ENCODE measurements at regions of chrX and their contacts with region 1.

Region 1: DNA sequence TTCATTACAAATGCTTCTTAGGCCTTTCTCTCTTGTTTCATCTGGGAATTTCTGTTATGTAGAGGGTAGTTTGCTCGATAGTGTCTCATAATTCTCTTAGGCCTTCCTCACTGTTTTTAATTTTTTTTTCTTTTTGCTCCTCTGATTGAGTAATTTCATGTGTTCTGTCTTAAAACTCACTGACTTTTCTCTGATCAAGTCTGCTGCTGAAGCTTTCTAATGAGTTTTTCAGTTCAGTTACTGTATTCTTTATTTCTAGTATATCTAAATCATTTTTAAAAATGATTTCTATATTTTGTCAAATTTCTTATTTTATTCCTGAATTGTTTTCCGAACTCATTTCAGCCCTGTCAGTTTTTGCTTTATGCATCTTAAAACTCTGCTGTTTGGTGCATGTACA is 228.0 kb downstream of the MID1IP1 start:
- DNase-seq: no peak
- H3K4me3 ChIP-seq: no peak overlapping the region
- H3K27ac ChIP-seq: no peak overlapping the region
- H3K4me1 ChIP-seq: no peaks in the 10 kb centered on the region
- H3K27me3 ChIP-seq: peaks cover 0 to 8% of the 10 kb centered on the region in 2 donors
- CTCF ChIP-seq: no peak
- POLR2A ChIP-seq: no peak

Region 2: DNA sequence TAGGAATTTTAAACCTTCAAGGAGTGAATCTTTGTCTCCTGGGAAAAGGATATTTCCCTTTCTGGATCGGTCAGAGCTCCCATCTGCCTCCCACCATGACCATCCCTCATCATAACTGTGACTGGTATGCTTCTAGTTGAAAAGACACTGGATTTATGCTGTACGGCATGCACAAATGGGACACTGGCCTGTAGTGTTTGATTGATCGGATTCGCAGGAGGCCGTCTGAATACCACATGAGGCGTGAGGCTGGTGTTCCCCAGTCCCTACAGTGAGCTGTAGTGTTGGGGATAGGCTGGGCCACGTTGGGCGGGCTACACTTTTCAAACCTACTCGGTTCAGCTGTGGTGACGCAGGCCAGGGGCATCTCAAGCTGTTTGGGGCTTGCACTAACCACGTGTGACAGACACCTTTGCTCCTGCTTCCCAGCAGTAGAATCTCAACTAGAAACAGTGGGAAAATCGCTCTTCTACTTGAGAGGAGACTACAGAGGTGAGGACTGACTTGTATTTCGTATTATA is 126.2 kb before region 1 on chrX:
- intact Hi-C with region 1: no loop called
- DNase-seq: no peak
- H3K4me3 ChIP-seq: no peak overlapping the region
- H3K27ac ChIP-seq: no peak overlapping the region
- H3K4me1 ChIP-seq: no peaks in the 10 kb centered on the region
- H3K27me3 ChIP-seq: peaks cover 0 to 31% of the 10 kb centered on the region in 2 donors
- CTCF ChIP-seq: no peak
- POLR2A ChIP-seq: no peak

Region 3: DNA sequence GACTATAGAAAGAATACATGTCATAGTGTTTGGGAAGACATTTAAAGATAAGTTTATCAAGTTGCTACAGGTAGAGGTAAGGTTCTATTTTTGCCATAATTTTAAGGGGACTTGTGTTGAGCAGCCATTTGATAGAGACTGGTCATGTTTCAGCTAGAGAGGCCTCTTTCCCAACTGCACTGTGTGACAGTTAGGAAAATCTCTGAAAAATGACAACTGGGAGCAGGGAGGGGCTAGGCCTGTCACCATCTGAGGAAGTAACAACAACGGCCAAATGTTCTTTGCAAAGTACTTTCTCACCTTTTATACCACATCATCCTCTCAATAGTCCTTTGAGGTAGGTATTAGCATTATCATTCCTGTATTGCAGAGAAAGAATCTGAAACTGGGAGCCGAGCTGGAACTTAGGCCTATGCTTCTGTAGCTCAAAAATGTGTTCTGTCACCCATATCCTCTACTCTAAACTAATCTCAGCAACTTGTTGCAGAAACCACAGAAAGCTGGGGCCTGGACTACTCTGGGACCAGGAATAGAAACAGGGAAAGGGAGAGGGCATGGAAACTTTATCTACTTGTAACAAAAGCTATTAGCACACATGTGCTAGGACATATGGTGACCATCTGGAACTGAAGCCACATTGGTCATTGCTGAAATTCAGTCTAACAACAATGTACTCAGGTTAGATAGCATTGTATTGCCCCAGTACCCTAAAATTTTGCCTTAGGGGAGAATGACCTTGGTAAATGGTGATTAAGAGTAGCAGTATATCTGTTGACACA is 29.1 kb before region 1 on chrX:
- intact Hi-C with region 1: no loop called
- DNase-seq: no peak
- H3K4me3 ChIP-seq: no peak overlapping the region
- H3K27ac ChIP-seq: no peak overlapping the region
- H3K4me1 ChIP-seq: no peaks in the 10 kb centered on the region
- H3K27me3 ChIP-seq: peaks cover 0 to 17% of the 10 kb centered on the region in 2 donors
- CTCF ChIP-seq: no peak
- POLR2A ChIP-seq: no peak

Region 4: GRCh38 chrX:39519566-39520301 is 490.5 kb after region 1 on chrX:
- intact Hi-C with region 1: loop called (anchors 5 kb)
- DNase-seq: no peak
- H3K4me3 ChIP-seq: no peak overlapping the region
- H3K27ac ChIP-seq: no peak overlapping the region
- H3K4me1 ChIP-seq: no peaks in the 10 kb centered on the region
- H3K27me3 ChIP-seq: peaks cover 0 to 69% of the 10 kb centered on the region in 2 donors
- CTCF ChIP-seq: no peak
- POLR2A ChIP-seq: no peak